ENCODE measurements at regions of chr14 and their contacts with region 1.

Region 1: DNA sequence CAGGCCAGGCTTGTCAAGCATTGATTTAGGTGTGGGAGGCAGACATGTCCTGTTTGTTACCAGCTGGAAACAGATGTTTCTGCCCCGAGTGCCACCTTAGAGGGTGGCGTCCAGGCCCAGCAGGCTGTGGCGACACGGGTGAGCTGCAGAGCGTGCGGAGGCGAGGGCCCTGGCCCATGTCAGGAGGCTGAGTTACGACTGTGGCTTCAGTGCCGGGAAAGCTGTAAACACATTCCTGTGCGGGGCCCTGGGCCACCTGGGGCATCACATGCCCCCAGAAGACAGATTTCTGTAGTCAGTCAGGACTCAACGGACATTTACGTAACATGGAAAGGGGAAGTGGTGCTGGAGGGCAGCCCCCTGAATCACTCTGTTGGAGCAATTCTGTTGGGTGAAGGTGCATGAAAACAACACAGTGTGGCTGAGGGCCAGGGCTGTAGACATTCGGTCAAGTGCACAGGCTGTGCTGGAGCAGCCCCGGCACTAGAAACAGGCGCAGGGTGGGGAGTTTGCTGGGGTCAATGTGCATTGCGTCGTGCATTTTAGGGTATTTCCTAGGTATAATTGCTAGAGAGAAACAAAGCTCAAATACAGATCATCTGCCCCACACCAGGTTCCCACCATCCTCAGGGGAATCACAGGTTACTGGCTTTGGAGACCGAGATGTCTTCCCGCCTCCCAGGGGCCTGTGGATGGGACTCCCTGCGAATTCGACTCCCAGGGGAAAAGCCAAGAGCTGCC is 291.8 kb downstream of the TMEM121 start:
- DNase-seq: no peak
- H3K4me3 ChIP-seq: no peak overlapping the region
- H3K27ac ChIP-seq: no peak overlapping the region
- H3K4me1 ChIP-seq: no peaks in the 10 kb centered on the region
- H3K27me3 ChIP-seq: peaks cover 0 to 8% of the 10 kb centered on the region in 2 donors
- CTCF ChIP-seq: no peak
- POLR2A ChIP-seq: no peak

Region 2: GRCh38 chr14:104318558-104319421 is 1499.4 kb before region 1 on chr14:
- intact Hi-C with region 1: loop called (anchors 5 kb)
- DNase-seq: peak in 1 of 2 donors; percentile 44
- H3K4me3 ChIP-seq: no peak overlapping the region
- H3K27ac ChIP-seq: no peak overlapping the region
- H3K4me1 ChIP-seq: no peaks in the 10 kb centered on the region
- H3K27me3 ChIP-seq: peaks cover 0 to 65% of the 10 kb centered on the region in 2 donors
- CTCF ChIP-seq: no peak
- POLR2A ChIP-seq: no peak

Region 3: DNA sequence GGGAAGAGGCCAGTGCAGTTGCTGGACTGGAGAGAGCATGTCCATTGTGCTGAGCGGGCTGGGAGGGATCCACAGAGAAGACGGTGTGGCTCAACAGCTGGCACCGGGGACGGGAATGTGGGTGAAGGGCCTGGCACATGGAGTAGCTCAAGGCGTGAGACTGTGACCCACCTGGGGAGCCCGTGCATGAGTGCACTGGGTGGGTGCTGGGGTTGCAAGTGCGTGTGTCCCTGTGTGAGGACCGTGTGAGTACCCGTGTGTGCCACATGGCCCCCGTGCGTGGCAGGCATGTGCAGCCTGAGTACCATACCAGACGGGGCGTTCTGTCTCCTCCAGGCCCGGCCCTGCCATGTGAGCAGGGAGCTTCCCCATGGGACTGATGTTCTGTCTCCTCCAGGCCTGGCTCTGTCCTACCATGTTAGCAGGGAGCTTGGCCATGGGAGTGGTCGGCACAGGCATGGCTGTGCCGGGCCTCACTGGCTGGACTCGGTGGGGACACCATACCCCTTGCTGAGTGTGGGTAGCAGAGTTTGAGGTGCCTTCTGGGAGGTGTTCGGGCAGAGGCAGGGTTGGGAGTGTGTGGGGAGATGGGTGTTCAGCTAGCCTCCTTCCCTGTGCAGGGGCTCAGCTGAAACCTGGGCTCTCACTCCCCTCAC is 57.3 kb before region 1 on chr14:
- intact Hi-C with region 1: no loop called
- DNase-seq: no peak
- H3K4me3 ChIP-seq: no peak overlapping the region
- H3K27ac ChIP-seq: no peak overlapping the region
- H3K4me1 ChIP-seq: no peaks in the 10 kb centered on the region
- H3K27me3 ChIP-seq: no peaks in the 10 kb centered on the region
- CTCF ChIP-seq: no peak
- POLR2A ChIP-seq: no peak

Region 4: GRCh38 chr14:105879867-105880561 is 61.9 kb after region 1 on chr14:
- intact Hi-C with region 1: loop called (anchors 2 kb)
- DNase-seq: peak in 1 of 2 donors; percentile 47
- H3K4me3 ChIP-seq: no peak overlapping the region
- H3K27ac ChIP-seq: no peak overlapping the region
- H3K4me1 ChIP-seq: no peaks in the 10 kb centered on the region
- H3K27me3 ChIP-seq: peaks cover 0 to 9% of the 10 kb centered on the region in 2 donors
- CTCF ChIP-seq: no peak
- POLR2A ChIP-seq: no peak

Measured in breast epithelium (tissue), 4 donors.